Calu3 (cell line): ENCODE measurements at regions of chr15 and their contacts with region 1.

Region 1: GRCh38 chr15:50145451-50145872 is 26.4 kb upstream of the ATP8B4 start:
- DNase-seq: peak; percentile 19
- H3K4me3 Mint-ChIP-seq: no peak overlapping the region
- H3K27ac Mint-ChIP-seq: no peak overlapping the region
- H3K4me1 Mint-ChIP-seq: peaks cover 10% of the 10 kb centered on the region
- H3K27me3 Mint-ChIP-seq: no peaks in the 10 kb centered on the region
- CTCF ChIP-seq: peak; percentile 37

Region 2: GRCh38 chr15:48861813-48862431 is 1283.5 kb before region 1 on chr15:
- CTCF ChIA-PET with region 1: interaction called, 6 read pairs
- intact Hi-C with region 1: loop called (anchors 1 kb)
- DNase-seq: peak; percentile 65
- H3K4me3 Mint-ChIP-seq: no peak overlapping the region
- H3K27ac Mint-ChIP-seq: no peak overlapping the region
- H3K4me1 Mint-ChIP-seq: peaks cover 30% of the 10 kb centered on the region
- H3K27me3 Mint-ChIP-seq: no peaks in the 10 kb centered on the region
- CTCF ChIP-seq: peak; percentile 32

Region 3: DNA sequence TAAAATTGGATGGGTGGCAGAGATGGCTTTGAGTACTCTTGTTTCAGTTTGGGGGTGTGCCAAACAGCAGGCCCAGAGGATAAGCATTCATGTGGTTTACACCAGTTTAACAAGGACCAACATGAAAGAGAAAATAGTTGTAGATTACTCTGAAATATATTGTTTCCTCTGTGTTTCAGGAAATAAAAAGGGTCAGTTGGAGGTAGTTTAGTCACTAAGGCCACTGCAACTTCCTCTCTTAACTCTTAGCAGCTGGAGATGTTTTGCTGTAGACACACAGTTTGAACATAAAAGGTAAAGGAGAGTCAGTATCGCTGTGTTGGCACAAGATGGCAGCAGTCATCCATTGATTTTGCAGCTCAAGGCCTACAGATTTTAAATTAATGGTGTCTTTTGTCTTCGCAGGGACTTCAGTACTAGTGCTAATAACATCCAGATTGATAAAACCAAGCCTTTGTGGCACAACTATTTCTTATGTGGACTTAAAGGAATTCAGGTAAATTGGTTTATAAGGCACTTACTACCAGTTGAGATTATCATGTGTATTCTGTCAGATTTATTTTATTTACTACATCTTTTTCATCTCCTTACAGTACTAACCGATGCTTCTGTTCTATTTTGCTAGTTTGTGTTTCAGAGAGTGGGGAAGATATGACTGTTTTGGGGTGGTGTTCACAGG is 909.9 kb before region 1 on chr15:
- CTCF ChIA-PET with region 1: interaction called, 3 read pairs
- intact Hi-C with region 1: loop called (anchors 10 kb)
- DNase-seq: peak; percentile 36
- H3K4me3 Mint-ChIP-seq: no peak overlapping the region
- H3K27ac Mint-ChIP-seq: no peak overlapping the region
- H3K4me1 Mint-ChIP-seq: peaks cover 13% of the 10 kb centered on the region
- H3K27me3 Mint-ChIP-seq: no peaks in the 10 kb centered on the region
- CTCF ChIP-seq: peak; percentile 35

Region 4: GRCh38 chr15:49876401-49877038 is 268.9 kb before region 1 on chr15:
- CTCF ChIA-PET with region 1: interaction called, 3 read pairs
- intact Hi-C with region 1: loop called (anchors 10 kb)
- DNase-seq: no peak
- H3K4me3 Mint-ChIP-seq: no peak overlapping the region
- H3K27ac Mint-ChIP-seq: no peak overlapping the region
- H3K4me1 Mint-ChIP-seq: no peaks in the 10 kb centered on the region
- H3K27me3 Mint-ChIP-seq: peaks cover 12% of the 10 kb centered on the region
- CTCF ChIP-seq: no peak

Region 5: GRCh38 chr15:50182219-50183013 is 37.0 kb after region 1 on chr15:
- CTCF ChIA-PET with region 1: no interaction called
- intact Hi-C with region 1: loop called (anchors 2 kb)
- DNase-seq: peak; percentile 32
- H3K4me3 Mint-ChIP-seq: peak overlapping the region; percentile 97
- H3K27ac Mint-ChIP-seq: peak overlapping the region; percentile 24
- H3K4me1 Mint-ChIP-seq: peaks cover 18% of the 10 kb centered on the region
- H3K27me3 Mint-ChIP-seq: no peaks in the 10 kb centered on the region
- CTCF ChIP-seq: no peak

Region 6: DNA sequence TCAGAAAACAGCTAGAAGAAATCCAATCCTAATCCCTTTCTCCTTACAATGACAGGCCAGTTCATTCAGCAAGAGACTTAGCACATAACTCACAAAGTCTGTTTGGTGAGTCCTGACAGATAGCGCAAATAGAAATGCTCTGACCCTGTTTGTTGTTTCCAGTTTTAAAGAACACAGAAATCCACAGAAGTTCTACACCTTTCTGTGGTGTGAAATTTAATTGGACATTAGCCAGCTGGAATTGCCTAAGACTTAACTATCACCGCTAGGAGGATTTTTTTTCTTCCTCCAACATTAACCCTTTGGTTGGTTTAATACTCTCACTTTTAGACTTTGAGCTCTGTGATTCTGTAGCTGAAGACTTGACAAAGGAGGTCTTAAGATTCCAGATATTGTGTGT is 89.3 kb after region 1 on chr15:
- CTCF ChIA-PET with region 1: no interaction called
- intact Hi-C with region 1: no loop called
- DNase-seq: no peak
- H3K4me3 Mint-ChIP-seq: no peak overlapping the region
- H3K27ac Mint-ChIP-seq: no peak overlapping the region
- H3K4me1 Mint-ChIP-seq: no peaks in the 10 kb centered on the region
- H3K27me3 Mint-ChIP-seq: no peaks in the 10 kb centered on the region
- CTCF ChIP-seq: no peak

Region 7: DNA sequence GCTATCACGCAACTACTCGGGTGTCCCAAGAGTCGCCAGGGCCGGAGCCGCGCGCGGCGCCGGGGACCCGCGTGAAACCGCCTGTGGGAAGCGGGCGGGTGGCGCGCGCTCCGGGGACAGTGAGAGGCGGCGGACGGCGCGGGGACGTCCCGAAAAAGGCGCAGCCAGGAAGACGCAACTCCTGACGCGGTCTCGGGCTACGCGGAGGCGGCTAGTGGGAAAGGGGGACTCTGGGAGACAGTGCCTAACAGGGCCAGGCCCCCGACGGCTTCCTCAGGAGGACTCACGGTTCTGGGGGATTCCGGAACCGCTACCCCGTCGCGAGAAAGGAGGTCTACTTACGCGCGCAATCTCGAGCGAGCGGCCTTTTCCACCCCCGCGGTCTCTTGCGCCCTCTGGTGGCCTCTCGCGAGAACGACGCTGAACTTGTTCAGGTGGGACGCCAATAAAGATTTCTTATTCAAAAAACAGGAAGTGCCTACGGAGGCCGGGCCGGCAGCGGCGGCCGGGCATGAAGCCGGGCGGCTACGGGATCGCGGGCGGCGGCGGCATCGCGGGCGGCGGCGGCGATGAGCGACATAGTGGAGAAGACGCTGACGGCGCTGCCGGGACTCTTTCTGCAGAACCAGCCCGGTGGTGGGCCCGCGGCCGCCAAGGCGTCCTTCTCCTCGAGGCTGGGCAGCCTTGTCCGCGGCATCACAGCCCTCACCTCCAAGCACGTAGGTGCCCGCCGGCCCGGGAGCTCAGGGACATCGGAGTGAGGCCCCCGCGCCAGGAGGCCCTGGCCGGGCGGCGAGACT is 762.9 kb after region 1 on chr15 and contains the start of gene AP4E1:
- CTCF ChIA-PET with region 1: no interaction called
- intact Hi-C with region 1: loop called (anchors 5 kb)
- DNase-seq: peak; percentile 95
- H3K4me3 Mint-ChIP-seq: peak within 1 kb of the TSS; percentile 83
- H3K27ac Mint-ChIP-seq: peak within 1 kb of the TSS; percentile 70
- H3K4me1 Mint-ChIP-seq: peaks cover 7% of the 10 kb centered on the region
- H3K27me3 Mint-ChIP-seq: no peaks in the 10 kb centered on the region
- CTCF ChIP-seq: peak; percentile 98
- total RNA-seq, gene AP4E1: 10.6 and 10.7 TPM in 2 replicates